Mammary epithelial cell (primary cell): ENCODE measurements at regions of chr17 and their contacts with region 1.

Region 1: DNA sequence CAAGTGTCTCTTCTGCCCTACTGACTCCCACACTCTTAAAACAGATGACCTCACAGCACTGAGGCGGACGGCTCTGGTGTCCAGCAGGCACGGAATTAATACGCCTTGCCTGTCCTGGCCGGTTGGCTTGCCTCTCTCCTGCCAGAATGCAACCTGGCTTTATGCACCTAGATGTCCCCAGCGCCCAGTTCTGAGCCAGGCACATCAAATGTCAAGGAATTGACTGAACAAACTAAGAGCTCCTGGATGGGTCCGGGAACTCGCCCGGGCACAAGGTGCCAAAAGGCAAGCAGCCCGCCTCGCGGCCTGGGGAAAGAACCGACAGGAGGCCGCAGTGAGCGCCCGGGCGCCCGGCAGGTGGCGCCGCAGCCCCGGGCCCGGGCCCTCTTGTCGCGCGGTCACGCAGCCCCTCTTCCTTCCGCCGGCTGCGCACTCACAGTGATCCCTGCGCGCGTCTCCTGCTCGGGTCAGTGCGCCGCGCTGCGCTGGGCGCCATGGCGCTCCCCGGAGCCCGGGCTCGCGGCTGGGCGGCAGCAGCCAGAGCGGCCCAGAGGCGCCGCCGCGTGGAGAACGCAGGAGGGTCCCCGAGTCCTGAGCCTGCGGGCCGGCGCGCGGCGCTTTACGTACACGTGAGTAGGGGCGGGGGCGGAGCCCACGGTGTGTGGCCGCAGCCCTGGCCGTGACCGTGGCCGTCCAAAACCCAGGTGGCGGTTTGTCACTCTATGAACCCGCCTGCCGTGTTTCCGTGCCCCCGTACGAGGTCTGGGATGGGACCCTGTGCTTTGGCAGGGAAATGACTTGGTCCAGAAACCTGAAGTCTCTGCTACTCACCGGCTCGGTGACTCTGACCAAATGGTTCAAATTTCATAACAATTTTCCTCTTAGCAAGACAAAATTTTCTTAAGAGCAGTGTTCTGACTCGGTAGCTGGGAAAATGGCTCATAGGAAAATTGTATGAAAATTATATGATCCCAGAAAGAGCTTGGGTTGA is at the start of gene RSAD1:
- DNase-seq: peak; percentile 88
- H3K4me3 ChIP-seq: peak within 1 kb of the TSS; percentile 77 to 98 (median 98)
- H3K27ac ChIP-seq: peak within 1 kb of the TSS; percentile 64
- H3K4me1 ChIP-seq: peaks cover 29% of the 10 kb centered on the region
- H3K27me3 ChIP-seq: no peaks in the 10 kb centered on the region
- CTCF ChIP-seq: peak; percentile 46 to 74
- total RNA-seq, gene RSAD1: 17.2 to 29.9 TPM

Region 2: GRCh38 chr17:50297407-50297865 is 181.2 kb before region 1 on chr17:
- CTCF ChIA-PET with region 1: no interaction called
- dilution Hi-C with region 1: no loop called
- in situ Hi-C with region 1: no loop called
- intact Hi-C with region 1: loop called (anchors 2 kb)
- DNase-seq: no peak
- H3K4me3 ChIP-seq: no peak overlapping the region
- H3K27ac ChIP-seq: no peak overlapping the region
- H3K4me1 ChIP-seq: no peaks in the 10 kb centered on the region
- H3K27me3 ChIP-seq: no peaks in the 10 kb centered on the region
- CTCF ChIP-seq: peak; percentile 82 to 93

Region 3: GRCh38 chr17:50425682-50426471 is 52.8 kb before region 1 on chr17 and contains the start of gene ACSF2:
- CTCF ChIA-PET with region 1: no interaction called
- dilution Hi-C with region 1: no loop called
- in situ Hi-C with region 1: no loop called
- intact Hi-C with region 1: loop called (anchors 1 kb)
- DNase-seq: peak; percentile 57
- H3K4me3 ChIP-seq: peak within 1 kb of the TSS; percentile 58 to 79 (median 61)
- H3K27ac ChIP-seq: peak within 1 kb of the TSS; percentile 56
- H3K4me1 ChIP-seq: peaks cover 61% of the 10 kb centered on the region
- H3K27me3 ChIP-seq: no peaks in the 10 kb centered on the region
- CTCF ChIP-seq: no peak
- total RNA-seq, gene ACSF2: 28.1 to 37.2 TPM

Region 4: GRCh38 chr17:50452610-50453300 is 25.9 kb before region 1 on chr17:
- CTCF ChIA-PET with region 1: no interaction called
- dilution Hi-C with region 1: no loop called
- in situ Hi-C with region 1: no loop called
- intact Hi-C with region 1: no loop called
- DNase-seq: peak; percentile 59
- H3K4me3 ChIP-seq: no peak overlapping the region
- H3K27ac ChIP-seq: no peak overlapping the region
- H3K4me1 ChIP-seq: peaks cover 6% of the 10 kb centered on the region
- H3K27me3 ChIP-seq: no peaks in the 10 kb centered on the region
- CTCF ChIP-seq: no peak

Region 5: GRCh38 chr17:50534222-50534978 is 55.7 kb after region 1 on chr17:
- CTCF ChIA-PET with region 1: no interaction called
- dilution Hi-C with region 1: no loop called
- in situ Hi-C with region 1: no loop called
- intact Hi-C with region 1: loop called (anchors 1 kb)
- DNase-seq: peak; percentile 86
- H3K4me3 ChIP-seq: peak overlapping the region; percentile 51 to 87 (median 64)
- H3K27ac ChIP-seq: peak overlapping the region; percentile 36
- H3K4me1 ChIP-seq: peaks cover 56% of the 10 kb centered on the region
- H3K27me3 ChIP-seq: no peaks in the 10 kb centered on the region
- CTCF ChIP-seq: peak; percentile 52 to 74

Region 6: DNA sequence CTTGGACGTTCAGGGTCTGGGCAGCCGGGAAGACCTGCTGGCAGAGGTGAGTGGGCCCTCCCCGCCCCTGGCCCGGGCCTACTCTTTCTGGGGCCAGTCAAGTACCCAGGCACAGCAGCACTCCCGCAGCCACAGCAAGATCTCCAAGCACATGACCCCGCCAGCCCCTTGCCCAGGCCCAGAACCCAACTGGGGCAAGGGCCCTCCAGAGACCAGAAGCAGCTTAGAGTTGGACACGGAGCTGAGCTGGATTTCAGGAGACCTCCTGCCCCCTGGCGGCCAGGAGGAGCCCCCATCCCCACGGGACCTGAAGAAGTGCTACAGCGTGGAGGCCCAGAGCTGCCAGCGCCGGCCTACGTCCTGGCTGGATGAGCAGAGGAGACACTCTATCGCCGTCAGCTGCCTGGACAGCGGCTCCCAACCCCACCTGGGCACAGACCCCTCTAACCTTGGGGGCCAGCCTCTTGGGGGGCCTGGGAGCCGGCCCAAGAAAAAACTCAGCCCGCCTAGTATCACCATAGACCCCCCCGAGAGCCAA is 147.4 kb after region 1 on chr17:
- CTCF ChIA-PET with region 1: no interaction called
- dilution Hi-C with region 1: no loop called
- in situ Hi-C with region 1: loop called (anchors 5 to 10 kb)
- intact Hi-C with region 1: loop called (anchors 1 kb)
- DNase-seq: peak; percentile 39
- H3K4me3 ChIP-seq: no peak overlapping the region
- H3K27ac ChIP-seq: no peak overlapping the region
- H3K4me1 ChIP-seq: no peaks in the 10 kb centered on the region
- H3K27me3 ChIP-seq: no peaks in the 10 kb centered on the region
- CTCF ChIP-seq: peak; percentile 62 to 80

Region 7: DNA sequence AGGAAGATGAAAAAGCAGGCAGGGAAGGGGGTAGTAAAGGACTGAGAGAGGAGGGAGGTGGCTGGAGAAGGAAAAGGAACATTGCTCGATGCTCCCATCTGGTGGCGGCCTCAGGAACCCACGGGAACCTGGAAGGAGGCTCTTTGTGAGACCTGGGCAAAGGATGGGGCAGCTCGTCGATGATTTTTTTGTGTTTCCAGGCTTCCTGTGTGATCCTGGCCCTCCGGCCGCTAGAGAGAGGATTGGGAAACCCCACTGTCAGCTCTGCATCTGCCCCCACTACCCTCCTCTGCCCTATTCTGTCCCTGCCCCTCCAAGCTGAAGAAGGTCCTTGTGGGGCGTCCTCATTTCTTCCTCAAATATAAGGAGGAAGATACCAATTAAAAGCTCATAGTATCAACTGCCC is 363.3 kb after region 1 on chr17:
- CTCF ChIA-PET with region 1: no interaction called
- dilution Hi-C with region 1: no loop called
- in situ Hi-C with region 1: no loop called
- intact Hi-C with region 1: loop called (anchors 10 kb)
- DNase-seq: peak; percentile 51
- H3K4me3 ChIP-seq: no peak overlapping the region
- H3K27ac ChIP-seq: no peak overlapping the region
- H3K4me1 ChIP-seq: peaks cover 28% of the 10 kb centered on the region
- H3K27me3 ChIP-seq: no peaks in the 10 kb centered on the region
- CTCF ChIP-seq: peak; percentile 86 to 92